HepG2 (cell line): ENCODE measurements at regions of chr4 and their contacts with region 1.

Region 1: GRCh38 chr4:1862055-1862926 is 6.3 kb upstream of the LETM1 start:
- DNase-seq: no peak
- ATAC-seq: no peak
- H3K4me3 ChIP-seq: peak overlapping the region; percentile 55 to 75 (median 64); a peak in 5 of 6 replicates
- H3K27ac ChIP-seq: peak overlapping the region; percentile 86
- H3K4me1 ChIP-seq: peaks cover 85% of the 10 kb centered on the region
- H3K27me3 ChIP-seq: no peaks in the 10 kb centered on the region
- CTCF ChIP-seq: no peak
- EP300 ChIP-seq: no peak
- POLR2A ChIP-seq: no peak
- RAD21 ChIP-seq: no peak

Region 2: DNA sequence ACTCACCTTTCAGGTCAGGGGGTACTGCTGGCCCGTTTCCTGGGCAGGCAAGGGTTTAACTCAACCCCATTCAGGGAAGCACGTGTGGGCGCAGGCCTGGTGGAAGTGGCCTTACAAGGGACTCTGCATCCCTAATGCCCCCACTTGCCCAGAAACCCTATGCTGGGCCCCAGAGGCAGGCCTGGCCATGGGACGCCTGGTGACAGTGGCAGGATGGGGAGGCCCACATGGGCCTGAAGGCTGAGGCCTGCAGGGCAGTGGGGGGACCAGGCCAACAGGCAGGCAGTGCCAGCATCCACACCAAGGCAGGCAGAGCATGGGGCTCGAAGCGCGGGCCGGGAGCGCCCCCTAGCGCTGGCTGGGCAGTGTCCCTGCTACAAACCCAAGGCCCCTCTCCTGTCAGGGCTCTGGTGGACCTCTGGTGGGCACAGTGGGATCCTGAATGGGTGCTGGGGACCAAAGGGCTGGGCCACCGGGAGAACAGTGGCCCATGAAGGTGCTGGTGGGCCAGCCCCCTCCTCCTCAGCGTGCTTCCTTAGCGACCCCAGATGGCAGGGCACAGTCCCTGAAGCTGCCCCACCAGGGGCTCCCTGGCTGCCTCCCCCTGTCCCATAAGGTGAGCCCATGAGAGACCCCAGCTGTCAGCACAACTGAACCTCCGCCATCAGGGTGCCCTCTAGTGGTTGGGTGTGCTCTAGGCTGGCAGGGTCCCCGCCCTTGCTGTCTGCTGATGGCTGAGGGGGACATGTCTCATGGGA is 52.4 kb before region 1 on chr4:
- CTCF ChIA-PET with region 1: no interaction called
- POLR2A ChIA-PET with region 1: no interaction called
- in situ Hi-C with region 1: no loop called
- intact Hi-C with region 1: no loop called
- DNase-seq: peak; percentile 86
- ATAC-seq: peak; percentile 87
- H3K4me3 ChIP-seq: no peak overlapping the region
- H3K27ac ChIP-seq: peak overlapping the region; percentile 24
- H3K4me1 ChIP-seq: peaks cover 20% of the 10 kb centered on the region
- H3K27me3 ChIP-seq: no peaks in the 10 kb centered on the region
- CTCF ChIP-seq: peak; percentile 94
- EP300 ChIP-seq: no peak
- POLR2A ChIP-seq: no peak
- RAD21 ChIP-seq: peak; percentile 99

Region 3: DNA sequence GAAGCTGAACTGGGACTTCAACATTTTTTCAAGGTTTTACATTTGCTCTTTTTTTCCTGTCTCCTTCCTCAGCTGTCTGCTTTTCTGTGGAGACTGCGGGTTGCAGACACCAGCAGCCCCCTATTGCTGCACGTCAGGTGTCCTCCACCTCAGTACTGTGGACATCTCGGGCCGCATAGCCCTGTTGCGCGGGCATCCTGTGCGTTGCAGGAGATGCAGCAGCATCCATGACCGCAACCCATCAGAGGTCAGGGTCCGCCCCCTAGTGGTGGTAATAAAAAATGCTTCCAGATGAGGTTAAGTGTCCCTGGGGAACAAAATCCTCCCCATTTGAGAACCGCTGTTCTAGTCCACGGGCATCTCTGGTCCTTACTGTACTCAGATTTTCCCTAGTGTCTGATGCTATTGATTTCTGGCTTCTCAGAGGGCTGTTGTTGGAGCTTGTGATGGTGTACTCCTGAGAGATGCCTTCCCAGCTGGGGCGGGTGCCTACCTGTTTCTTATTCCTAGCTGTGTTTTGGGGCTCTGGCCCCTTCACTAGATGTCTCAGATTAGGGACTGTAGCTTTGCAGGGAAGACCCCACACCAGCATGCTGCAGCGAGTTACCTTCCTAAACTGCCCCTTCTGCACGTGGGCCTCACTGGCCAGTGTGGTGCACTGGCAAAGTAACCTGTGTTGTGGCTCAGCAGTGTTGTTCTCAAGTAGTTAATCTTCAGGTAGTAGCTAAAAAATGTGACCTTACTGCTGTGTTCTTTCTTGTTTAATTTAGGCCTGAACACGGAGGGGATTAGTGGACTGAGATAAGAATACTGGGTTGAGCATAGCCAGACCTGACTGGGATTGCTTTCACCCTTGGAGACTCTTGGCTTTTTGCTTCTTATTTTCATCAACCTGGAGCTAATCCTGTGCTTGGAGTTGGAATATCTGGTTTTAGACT is 37.1 kb after region 1 on chr4:
- CTCF ChIA-PET with region 1: interaction called, 12 read pairs
- POLR2A ChIA-PET with region 1: interaction called, 4 read pairs
- in situ Hi-C with region 1: loop called (anchors 5 kb)
- intact Hi-C with region 1: loop called (anchors 2 kb)
- DNase-seq: peak; percentile 70
- ATAC-seq: peak; percentile 93
- H3K4me3 ChIP-seq: no peak overlapping the region
- H3K27ac ChIP-seq: no peak overlapping the region
- H3K4me1 ChIP-seq: peaks cover 53% of the 10 kb centered on the region
- H3K27me3 ChIP-seq: no peaks in the 10 kb centered on the region
- CTCF ChIP-seq: peak; percentile 93
- EP300 ChIP-seq: no peak
- POLR2A ChIP-seq: no peak
- RAD21 ChIP-seq: peak; percentile 92